ENCODE measurements at regions of chr1 and their contacts with region 1.

Region 1: DNA sequence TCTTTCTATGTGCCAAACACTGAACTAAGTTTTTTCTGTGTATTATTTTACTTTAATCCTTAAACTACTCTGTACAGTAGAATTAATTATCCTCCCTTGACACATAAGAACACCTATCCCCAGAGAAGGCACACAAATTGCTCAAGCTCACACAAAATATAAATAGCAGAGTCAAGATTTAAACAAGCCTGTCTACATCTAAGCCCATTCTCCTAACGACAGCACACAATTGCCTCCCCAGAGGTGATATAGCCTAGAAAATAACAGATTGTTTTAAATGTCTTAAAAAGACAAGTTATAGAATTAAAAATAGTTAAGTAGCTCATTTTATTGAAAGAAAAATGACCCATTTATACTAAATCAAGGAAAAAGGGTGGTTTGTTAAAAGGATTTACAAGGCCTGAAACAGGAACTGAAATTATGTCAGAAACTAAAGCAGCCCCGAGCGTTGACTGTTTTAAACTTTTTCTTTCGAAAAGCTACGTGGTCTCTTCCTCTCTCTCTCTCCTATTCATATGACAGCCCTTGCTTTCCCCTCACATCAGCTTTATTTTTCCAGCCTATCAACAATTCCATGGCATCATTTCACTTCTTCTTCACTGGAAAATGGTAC is 30.5 kb downstream of the TNFSF18 start:
- DNase-seq: peak; percentile 66
- ATAC-seq: peak; percentile 96
- H3K4me3 ChIP-seq: no peak overlapping the region
- H3K27ac ChIP-seq: peak overlapping the region; percentile 76
- H3K4me1 ChIP-seq: peaks cover 12% of the 10 kb centered on the region
- H3K27me3 ChIP-seq: no peaks in the 10 kb centered on the region
- CTCF ChIP-seq: no peak
- EP300 ChIP-seq: peak; percentile 47 to 62; a peak in 2 of 4 replicates
- POLR2A ChIP-seq: no peak
- RAD21 ChIP-seq: no peak

Region 2: DNA sequence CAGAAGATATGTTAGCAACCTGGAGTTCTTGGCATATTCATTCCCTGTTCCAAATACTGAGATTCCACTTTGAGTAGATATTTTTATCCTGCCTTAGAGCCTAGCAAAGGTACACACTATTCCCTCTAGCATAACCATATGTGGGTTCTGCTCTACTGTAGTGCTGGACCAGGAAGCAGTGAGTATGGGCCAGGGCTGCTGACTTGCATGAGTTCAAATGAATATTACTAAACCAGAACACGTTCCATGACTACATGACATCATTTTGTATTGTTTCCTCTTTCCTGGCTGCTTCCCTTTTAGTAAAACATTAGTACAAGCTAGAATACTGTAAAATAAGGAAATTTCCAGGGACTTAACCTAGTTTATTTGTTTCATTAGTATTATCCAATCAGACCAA is 10.6 kb before region 1 on chr1:
- CTCF ChIA-PET with region 1: interaction called, 8 read pairs
- POLR2A ChIA-PET with region 1: no interaction called
- RAD21 ChIA-PET with region 1: interaction called, 5 read pairs
- SMC1A ChIA-PET with region 1: interaction called, 10 read pairs
- in situ Hi-C with region 1: no loop called
- intact Hi-C with region 1: no loop called
- DNase-seq: no peak
- ATAC-seq: no peak
- H3K4me3 ChIP-seq: no peak overlapping the region
- H3K27ac ChIP-seq: no peak overlapping the region
- H3K4me1 ChIP-seq: no peaks in the 10 kb centered on the region
- H3K27me3 ChIP-seq: peaks cover 0 to 6% of the 10 kb centered on the region in 2 experiments; a peak in 1 of 4 replicates
- CTCF ChIP-seq: no peak
- EP300 ChIP-seq: no peak
- POLR2A ChIP-seq: no peak
- RAD21 ChIP-seq: no peak

Region 3: GRCh38 chr1:173258484-173259264 is 238.4 kb after region 1 on chr1:
- CTCF ChIA-PET with region 1: no interaction called
- POLR2A ChIA-PET with region 1: no interaction called
- RAD21 ChIA-PET with region 1: no interaction called
- SMC1A ChIA-PET with region 1: no interaction called
- in situ Hi-C with region 1: no loop called
- intact Hi-C with region 1: no loop called
- DNase-seq: no peak
- ATAC-seq: no peak
- H3K4me3 ChIP-seq: no peak overlapping the region
- H3K27ac ChIP-seq: no peak overlapping the region
- H3K4me1 ChIP-seq: peaks cover 4% of the 10 kb centered on the region; the same call in 1 of the 2 replicates
- H3K27me3 ChIP-seq: no peaks in the 10 kb centered on the region
- CTCF ChIP-seq: no peak
- EP300 ChIP-seq: no peak
- POLR2A ChIP-seq: no peak
- RAD21 ChIP-seq: no peak

Measured in GM12878 (cell line).